ENCODE measurements at regions of chr5 and their contacts with region 1.

Region 1: GRCh38 chr5:145825751-145826180 is 9.4 kb downstream of the PRELID2 start:
- DNase-seq: no peak
- ATAC-seq: no peak

Region 2: GRCh38 chr5:145681686-145682085 is 144.1 kb before region 1 on chr5:
- intact Hi-C with region 1: loop called (anchors 10 kb)
- DNase-seq: no peak
- ATAC-seq: peak; percentile 70

Measured in Right ventricle myocardium inferior (tissue), 1 donor.